Lower leg skin (tissue), 4 donors: ENCODE measurements at regions of chr20 and their contacts with region 1.

Region 1: DNA sequence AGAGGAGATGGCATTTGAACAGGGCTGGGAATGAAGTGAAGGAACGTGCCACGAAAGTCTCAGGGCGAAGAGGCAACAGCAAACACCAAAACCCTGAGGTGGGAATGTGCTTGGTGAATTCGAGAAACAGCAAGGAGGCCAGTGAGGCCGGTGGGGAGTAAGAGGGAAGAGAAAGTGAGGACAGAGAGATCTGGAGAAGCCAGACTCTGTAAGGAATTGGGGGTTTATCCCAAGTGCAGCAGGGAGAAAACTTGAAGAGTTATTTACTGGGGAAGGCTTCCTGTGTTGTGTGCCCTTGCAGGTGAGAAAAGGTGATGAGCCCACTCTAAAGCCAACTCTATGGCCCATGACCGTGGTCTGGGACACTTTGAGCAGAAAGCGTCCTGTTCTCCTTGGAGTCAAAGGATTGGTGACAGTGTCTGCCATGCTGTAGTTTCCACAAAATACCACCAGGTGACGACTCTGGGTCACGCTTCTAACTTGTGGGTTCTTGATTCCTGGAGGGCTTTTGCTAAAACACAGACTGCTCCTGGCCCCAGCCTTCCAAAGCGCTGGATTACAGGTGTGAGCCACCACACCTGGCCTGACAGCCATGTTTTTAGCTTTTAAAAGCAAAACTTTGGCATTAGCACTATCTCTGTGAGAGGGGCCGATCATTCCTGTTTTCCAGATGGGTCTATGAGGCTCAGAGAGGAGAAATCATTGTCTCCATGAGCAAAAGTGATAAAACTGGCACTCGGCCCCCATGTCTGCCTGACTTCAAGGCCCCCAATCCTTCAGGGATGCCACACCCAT is 18.0 kb upstream of the CSNK2A1 start:
- DNase-seq: peak; percentile 46 to 88
- H3K4me3 ChIP-seq: no peak overlapping the region
- CTCF ChIP-seq: peak in 1 of 3 donors; percentile 70
- POLR2A ChIP-seq: no peak

Region 2: DNA sequence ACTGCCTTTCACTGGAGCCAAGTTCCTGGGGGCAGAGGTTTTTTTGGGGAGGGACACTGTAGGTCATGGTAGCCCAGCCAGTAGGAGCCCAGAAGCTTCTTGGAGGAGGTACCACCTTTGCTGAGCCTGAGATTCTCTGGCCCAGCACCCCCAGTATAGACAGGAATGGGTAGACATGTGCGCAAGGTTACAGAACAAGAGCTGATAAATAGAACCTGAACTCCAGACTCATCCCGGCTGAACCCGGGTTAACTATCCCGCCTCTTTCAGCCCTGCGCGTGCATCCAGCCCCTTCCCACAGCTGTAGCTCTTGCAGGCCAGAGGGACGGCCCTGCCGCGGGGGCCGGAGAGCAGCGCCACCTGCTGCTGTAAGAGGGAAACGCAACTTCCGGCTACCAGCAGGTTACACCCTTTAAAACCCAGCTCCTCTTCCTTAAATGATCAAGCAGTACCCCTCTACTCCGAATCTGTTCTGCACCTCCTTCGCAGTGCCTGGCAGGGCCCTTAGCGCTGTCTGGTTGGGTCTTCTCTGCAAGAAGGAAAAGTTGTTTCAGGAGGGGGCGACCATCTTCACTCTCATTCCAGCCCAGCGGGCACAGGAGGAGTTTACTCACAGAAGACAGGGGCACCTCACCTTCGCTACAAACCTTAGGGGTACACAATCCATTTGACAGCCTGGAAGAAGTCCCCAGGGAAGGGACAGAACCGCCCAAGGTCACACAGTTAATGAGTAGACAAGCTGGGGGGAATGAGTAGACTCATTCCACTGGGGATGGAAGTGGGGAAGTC is 83.9 kb after region 1 on chr20:
- intact Hi-C with region 1: loop called (anchors 10 kb)
- DNase-seq: peak in 1 of 2 donors; percentile 93
- H3K4me3 ChIP-seq: no peak overlapping the region
- CTCF ChIP-seq: peak in 1 of 3 donors; percentile 80
- POLR2A ChIP-seq: no peak

Region 3: DNA sequence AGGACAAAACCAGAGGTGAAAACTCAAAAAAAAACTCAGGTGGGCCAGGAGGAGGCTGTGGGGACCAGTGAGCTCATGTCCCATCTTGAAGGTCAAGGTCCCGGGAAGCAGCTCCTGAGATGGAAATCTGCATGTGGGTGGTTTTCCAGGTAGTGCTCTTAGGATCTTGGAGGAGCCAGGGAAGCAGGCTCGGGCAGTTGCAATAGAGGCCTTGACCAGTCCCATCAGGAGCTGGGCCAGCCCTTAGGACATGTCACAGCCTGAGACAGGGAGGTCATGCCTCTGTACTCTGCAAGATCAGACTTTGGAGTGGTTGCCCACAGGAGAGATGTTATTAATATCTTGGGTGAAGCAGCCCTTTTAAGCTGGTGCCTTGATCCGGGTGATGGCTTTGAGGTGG is 175.3 kb after region 1 on chr20:
- intact Hi-C with region 1: loop called (anchors 5 kb)
- DNase-seq: no peak
- H3K4me3 ChIP-seq: no peak overlapping the region
- CTCF ChIP-seq: no peak
- POLR2A ChIP-seq: no peak